ENCODE measurements at regions of chr11 and their contacts with region 1.

Region 1: GRCh38 chr11:115504276-115505158 is at the start of gene CADM1:
- DNase-seq: peak; percentile 93 to 95
- H3K4me3 ChIP-seq: peak within 1 kb of the TSS; percentile 84 to 91 (median 86)
- H3K27ac ChIP-seq: peak within 1 kb of the TSS; percentile 75; the same call in 1 of the 2 replicates
- H3K4me1 ChIP-seq: peaks cover 7 to 14% (median 12%) of the 10 kb centered on the region in 4 experiments; a peak in 6 of 7 replicates
- H3K27me3 ChIP-seq: peaks cover 12 to 35% (median 31%) of the 10 kb centered on the region in 4 experiments
- CTCF ChIP-seq: peak; percentile 58 to 66 (median 62)
- EP300 ChIP-seq: peak in 1 of 2 experiments; percentile 25; a peak in 1 of 3 replicates
- POLR2A ChIP-seq: peak; percentile 89 to 90
- RAD21 ChIP-seq: peak; percentile 46 to 59; a peak in 3 of 4 replicates
- total RNA-seq, gene CADM1: 25.3 and 29.3 TPM in 2 replicates

Region 2: GRCh38 chr11:115334932-115335788 is 169.4 kb before region 1 on chr11:
- CTCF ChIA-PET with region 1: interaction called, 17 read pairs
- POLR2A ChIA-PET with region 1: no interaction called
- DNase-seq: no peak
- H3K4me3 ChIP-seq: no peak overlapping the region
- H3K27ac ChIP-seq: no peak overlapping the region
- H3K4me1 ChIP-seq: peaks cover 0 to 5% (median 0%) of the 10 kb centered on the region in 4 experiments; a peak in 1 of 7 replicates
- H3K27me3 ChIP-seq: no peaks in the 10 kb centered on the region
- CTCF ChIP-seq: peak in 2 of 3 experiments; percentile 33 to 37; a peak in 2 of 4 replicates
- EP300 ChIP-seq: no peak
- POLR2A ChIP-seq: no peak
- RAD21 ChIP-seq: peak; percentile 58 to 66

Region 3: DNA sequence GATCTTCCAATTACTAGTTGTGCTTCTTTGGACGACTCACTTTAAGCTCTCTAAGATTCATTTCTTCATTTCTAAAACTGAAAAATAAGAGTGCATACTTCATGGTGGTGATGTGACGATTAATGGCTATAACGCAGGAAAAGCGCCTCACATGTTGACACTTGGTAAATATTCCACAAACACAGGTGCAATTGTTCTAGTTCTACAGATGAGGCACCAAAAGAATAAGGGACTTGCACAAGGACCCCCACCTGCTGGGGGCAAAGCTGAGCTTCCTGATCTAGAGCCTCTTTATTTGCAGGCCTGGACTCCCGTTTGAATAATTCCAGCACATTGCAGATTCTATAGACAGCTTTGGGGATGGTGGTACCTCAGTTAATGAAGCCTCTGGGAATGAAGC is 14.5 kb after region 1 on chr11:
- CTCF ChIA-PET with region 1: interaction called, 13 read pairs
- POLR2A ChIA-PET with region 1: interaction called, 3 read pairs
- DNase-seq: no peak
- H3K4me3 ChIP-seq: no peak overlapping the region
- H3K27ac ChIP-seq: no peak overlapping the region
- H3K4me1 ChIP-seq: no peaks in the 10 kb centered on the region
- H3K27me3 ChIP-seq: no peaks in the 10 kb centered on the region; a peak in 1 of 7 replicates
- CTCF ChIP-seq: no peak
- EP300 ChIP-seq: no peak
- POLR2A ChIP-seq: no peak
- RAD21 ChIP-seq: no peak

Region 4: GRCh38 chr11:115530752-115531151 is 26.2 kb after region 1 on chr11:
- CTCF ChIA-PET with region 1: interaction called, 19 read pairs
- POLR2A ChIA-PET with region 1: interaction called, 4 read pairs
- DNase-seq: no peak
- H3K4me3 ChIP-seq: no peak overlapping the region
- H3K27ac ChIP-seq: no peak overlapping the region
- H3K4me1 ChIP-seq: peaks cover 6 to 9% (median 7%) of the 10 kb centered on the region in 4 experiments
- H3K27me3 ChIP-seq: no peaks in the 10 kb centered on the region; a peak in 1 of 7 replicates
- CTCF ChIP-seq: peak; percentile 67 to 92 (median 83)
- EP300 ChIP-seq: no peak
- POLR2A ChIP-seq: no peak
- RAD21 ChIP-seq: peak; percentile 61 to 77

Measured in H1 (cell line).